Sigmoid colon (tissue), 7 donors: ENCODE measurements at regions of chr3 and their contacts with region 1.

Region 1: DNA sequence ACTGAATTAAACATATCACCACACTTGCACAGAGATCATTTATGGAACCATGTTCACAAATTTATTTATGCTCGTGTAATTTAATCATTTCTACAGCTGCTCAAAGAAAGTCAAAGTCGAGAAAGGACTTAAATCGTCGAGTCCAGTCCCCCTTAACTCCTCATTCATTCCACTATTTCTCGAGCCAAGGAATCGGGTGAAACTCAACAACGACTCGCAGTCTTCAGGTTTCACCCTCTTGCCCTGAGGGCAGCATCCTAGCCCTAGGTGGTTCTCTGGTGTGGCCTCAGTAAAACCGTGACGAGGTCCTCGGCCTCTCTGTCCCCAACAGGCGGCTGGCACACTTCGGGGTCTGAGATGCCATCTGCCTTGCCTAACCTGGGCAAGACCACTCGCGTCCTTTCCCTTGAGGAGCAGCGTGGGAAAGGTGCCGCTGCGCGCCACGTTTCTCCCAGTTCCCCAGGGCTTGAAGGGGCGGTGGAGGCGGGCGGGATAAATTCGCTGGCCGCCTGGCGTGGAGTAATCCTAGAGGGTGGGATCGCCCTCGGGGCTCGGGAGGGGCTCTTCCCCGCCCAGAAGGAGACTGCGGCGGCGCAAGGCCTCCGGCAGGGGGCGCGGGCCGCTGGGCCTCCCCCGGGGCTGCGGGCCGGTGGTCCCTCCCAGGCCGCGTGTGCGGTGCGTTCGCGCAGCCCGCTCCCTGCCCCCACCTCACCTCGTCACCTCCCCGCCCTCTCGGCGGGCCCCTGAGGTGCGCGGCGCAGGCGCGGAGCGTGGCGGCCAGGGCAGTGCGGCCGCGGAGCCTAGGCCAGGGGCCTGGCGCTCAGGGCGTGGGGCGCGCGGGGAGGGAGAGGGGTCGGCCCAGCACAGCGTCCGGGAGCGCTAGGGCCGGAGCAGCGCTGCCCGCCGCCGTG is at the start of gene ZNF639:
- DNase-seq: peak; percentile 91
- H3K4me3 ChIP-seq: peak within 1 kb of the TSS; percentile 86 to 94 (median 91)
- H3K27ac ChIP-seq: peak within 1 kb of the TSS; percentile 94 to 99 (median 98)
- H3K4me1 ChIP-seq: peaks cover 0 to 44% (median 35%) of the 10 kb centered on the region in 4 donors
- H3K27me3 ChIP-seq: no peaks in the 10 kb centered on the region
- CTCF ChIP-seq: peak; percentile 24 to 87 (median 54)
- EP300 ChIP-seq: no peak
- POLR2A ChIP-seq: no peak
- total RNA-seq, gene ZNF639: 48.7 to 75.9 (median 65.8) TPM

Region 2: GRCh38 chr3:179071550-179072397 is 250.8 kb before region 1 on chr3 and contains the start of gene ZMAT3:
- intact Hi-C with region 1: loop called (anchors 10 kb)
- DNase-seq: peak; percentile 92
- H3K4me3 ChIP-seq: peak within 1 kb of the TSS; percentile 60 to 92 (median 75)
- H3K27ac ChIP-seq: peak within 1 kb of the TSS; percentile 87 to 96 (median 92)
- H3K4me1 ChIP-seq: peaks cover 0 to 29% (median 22%) of the 10 kb centered on the region in 4 donors
- H3K27me3 ChIP-seq: no peaks in the 10 kb centered on the region
- CTCF ChIP-seq: no peak
- EP300 ChIP-seq: no peak
- POLR2A ChIP-seq: no peak
- total RNA-seq, gene ZMAT3: 12.4 to 16.9 (median 14.7) TPM

Region 3: GRCh38 chr3:179147873-179148615 is 174.5 kb before region 1 on chr3 and contains the start of gene PIK3CA:
- intact Hi-C with region 1: loop called (anchors 1 kb)
- DNase-seq: peak; percentile 99
- H3K4me3 ChIP-seq: peak within 1 kb of the TSS; percentile 58 to 94 (median 80)
- H3K27ac ChIP-seq: peak within 1 kb of the TSS; percentile 95 to 99 (median 98)
- H3K4me1 ChIP-seq: peaks cover 0 to 27% (median 18%) of the 10 kb centered on the region in 4 donors
- H3K27me3 ChIP-seq: no peaks in the 10 kb centered on the region
- CTCF ChIP-seq: no peak
- EP300 ChIP-seq: no peak
- POLR2A ChIP-seq: peak; percentile 43 to 62
- total RNA-seq, gene PIK3CA: 21.6 to 44.6 (median 25.4) TPM

Region 4: DNA sequence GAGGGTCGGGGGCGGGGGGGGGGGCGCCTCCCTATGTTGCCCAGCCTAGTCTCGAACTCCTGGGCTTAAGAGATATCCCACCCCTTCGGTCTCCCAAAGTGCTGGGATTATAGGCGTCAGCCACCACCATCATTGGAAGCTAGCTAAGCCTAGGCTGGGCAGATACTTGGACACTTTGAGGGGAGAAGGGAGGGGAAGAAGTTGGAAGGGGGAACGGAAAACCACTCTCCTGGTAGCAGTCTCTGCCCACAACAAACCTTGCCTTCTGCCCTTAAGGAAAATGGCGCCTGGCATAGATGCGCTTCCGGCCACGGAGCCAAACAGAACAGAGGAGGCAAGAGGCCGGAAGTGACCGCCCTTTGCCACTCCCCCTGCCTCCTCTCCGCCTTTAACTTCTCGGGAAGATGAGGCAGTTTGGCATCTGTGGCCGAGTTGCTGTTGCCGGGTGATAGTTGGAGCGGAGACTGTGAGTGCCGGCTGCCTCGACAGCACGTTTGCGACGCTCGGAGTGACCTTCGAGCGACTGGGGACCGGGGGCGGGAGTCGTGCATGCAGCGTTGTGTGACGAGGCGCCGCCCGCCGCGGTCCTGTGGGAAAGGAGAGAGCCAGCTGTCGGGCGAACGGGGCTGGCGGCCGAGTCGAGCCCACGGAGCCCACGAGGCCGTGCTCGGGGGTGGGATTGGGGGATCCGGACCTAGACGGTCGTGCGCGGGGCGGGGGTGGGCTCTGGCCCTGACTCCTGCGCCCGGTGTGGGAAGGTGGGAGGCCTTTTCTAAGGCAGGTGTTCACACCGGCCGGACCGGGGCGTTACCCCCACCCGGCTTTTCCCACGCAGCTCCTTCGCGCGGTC is 25.0 kb after region 1 on chr3 and contains the start of gene MFN1:
- intact Hi-C with region 1: loop called (anchors 1 kb)
- DNase-seq: peak; percentile 98
- H3K4me3 ChIP-seq: peak within 1 kb of the TSS; percentile 72 to 85 (median 80)
- H3K27ac ChIP-seq: peak within 1 kb of the TSS; percentile 81 to 91 (median 88)
- H3K4me1 ChIP-seq: peaks cover 0 to 26% (median 13%) of the 10 kb centered on the region in 4 donors
- H3K27me3 ChIP-seq: no peaks in the 10 kb centered on the region
- CTCF ChIP-seq: no peak
- EP300 ChIP-seq: no peak
- POLR2A ChIP-seq: peak; percentile 22 to 61
- total RNA-seq, gene MFN1: 27.6 to 42.1 (median 37.0) TPM

Region 5: DNA sequence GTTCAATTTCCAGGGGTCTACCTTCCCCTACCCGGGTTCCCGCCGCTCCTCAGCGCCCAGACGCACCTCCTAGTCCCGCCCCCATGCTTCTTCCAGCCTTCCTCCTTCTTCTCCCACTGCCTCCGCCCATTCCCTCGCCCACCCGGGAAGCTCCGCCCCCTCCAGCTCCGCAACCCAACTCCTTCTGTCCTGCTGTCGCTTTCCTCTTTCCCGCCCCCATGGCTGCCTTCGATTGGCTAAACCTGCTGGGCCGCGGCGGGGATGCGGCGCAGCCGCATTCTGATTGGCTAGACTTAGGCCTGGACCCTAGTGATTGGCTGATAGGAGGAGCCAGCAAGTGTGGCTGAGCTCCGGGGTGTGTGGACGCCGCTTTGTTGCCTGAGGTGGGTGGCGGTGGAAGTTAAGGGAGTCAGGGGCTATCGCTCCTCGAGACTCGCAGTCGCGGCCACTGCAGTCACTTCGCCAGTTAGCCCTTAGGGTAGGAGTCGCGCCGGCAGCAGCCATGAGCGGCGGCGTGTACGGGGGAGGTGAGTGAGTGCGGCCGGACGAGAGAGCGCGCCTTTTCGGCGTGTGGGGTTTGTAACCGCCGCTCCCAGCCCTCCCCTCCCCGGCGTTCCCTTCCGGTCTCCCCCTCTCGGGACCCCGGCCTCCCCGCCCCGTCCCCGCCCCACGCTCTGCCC is 240.2 kb after region 1 on chr3 and contains the start of gene ACTL6A:
- intact Hi-C with region 1: loop called (anchors 2 kb)
- DNase-seq: peak; percentile 100
- H3K4me3 ChIP-seq: peak within 1 kb of the TSS; percentile 75 to 90 (median 79)
- H3K27ac ChIP-seq: peak within 1 kb of the TSS; percentile 83 to 92 (median 88)
- H3K4me1 ChIP-seq: peaks cover 0 to 17% (median 12%) of the 10 kb centered on the region in 4 donors
- H3K27me3 ChIP-seq: no peaks in the 10 kb centered on the region
- CTCF ChIP-seq: no peak
- EP300 ChIP-seq: no peak
- POLR2A ChIP-seq: peak; percentile 57 to 64
- total RNA-seq, gene ACTL6A: 28.8 to 65.7 (median 50.3) TPM